Keratinocyte (primary cell): ENCODE measurements at regions of chrX and their contacts with region 1.

Region 1: GRCh38 chrX:32538554-32538953 is 672.8 kb downstream of the DMD start:
- DNase-seq: no peak
- H3K4me3 ChIP-seq: no peak overlapping the region
- H3K27ac ChIP-seq: no peak overlapping the region
- H3K4me1 ChIP-seq: no peaks in the 10 kb centered on the region
- H3K27me3 ChIP-seq: no peaks in the 10 kb centered on the region
- CTCF ChIP-seq: no peak

Region 2: GRCh38 chrX:32137525-32137924 is 401.0 kb before region 1 on chrX:
- dilution Hi-C with region 1: no loop called
- DNase-seq: no peak
- H3K4me3 ChIP-seq: no peak overlapping the region
- H3K27ac ChIP-seq: no peak overlapping the region
- H3K4me1 ChIP-seq: no peaks in the 10 kb centered on the region
- H3K27me3 ChIP-seq: no peaks in the 10 kb centered on the region
- CTCF ChIP-seq: no peak

Region 3: GRCh38 chrX:32495855-32496254 is 42.7 kb before region 1 on chrX:
- dilution Hi-C with region 1: loop called (anchors 5 kb)
- DNase-seq: no peak
- H3K4me3 ChIP-seq: no peak overlapping the region
- H3K27ac ChIP-seq: no peak overlapping the region
- H3K4me1 ChIP-seq: no peaks in the 10 kb centered on the region
- H3K27me3 ChIP-seq: no peaks in the 10 kb centered on the region
- CTCF ChIP-seq: no peak

Region 4: DNA sequence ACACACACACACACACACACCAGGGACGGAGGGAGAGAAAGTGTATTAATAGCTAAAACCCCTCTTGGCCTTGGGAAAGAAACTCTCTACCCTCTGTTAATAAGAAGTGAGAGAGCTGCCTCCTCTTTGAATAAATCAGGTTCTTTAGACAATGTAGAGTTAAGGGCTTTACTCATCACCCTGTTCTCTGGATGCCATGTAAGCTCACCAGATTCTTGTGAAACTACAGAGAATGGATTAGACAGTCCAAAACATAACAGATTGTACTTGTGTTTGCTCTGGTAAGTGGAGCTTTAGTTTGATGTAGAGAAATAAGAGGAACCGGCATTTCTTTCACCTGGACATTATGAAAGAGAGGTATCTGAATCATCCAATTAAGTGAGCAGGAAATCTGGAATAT is 409.6 kb after region 1 on chrX:
- dilution Hi-C with region 1: no loop called
- DNase-seq: no peak
- H3K4me3 ChIP-seq: no peak overlapping the region
- H3K27ac ChIP-seq: no peak overlapping the region
- H3K4me1 ChIP-seq: no peaks in the 10 kb centered on the region
- H3K27me3 ChIP-seq: no peaks in the 10 kb centered on the region
- CTCF ChIP-seq: no peak